Caco-2 (cell line): ENCODE measurements at regions of chr13 and their contacts with region 1.

Region 1: GRCh38 chr13:91193358-91193757 is 154.1 kb upstream of the MIR17HG start:
- DNase-seq: peak; percentile 43 to 51
- H3K4me3 ChIP-seq: no peak overlapping the region
- H3K4me3 Mint-ChIP-seq: no peak overlapping the region
- H3K27ac Mint-ChIP-seq: no peak overlapping the region
- H3K4me1 ChIP-seq: peaks cover 11% of the 10 kb centered on the region
- H3K4me1 Mint-ChIP-seq: peaks cover 11% of the 10 kb centered on the region
- H3K27me3 ChIP-seq: peaks cover 2% of the 10 kb centered on the region; the same call in 1 of the 2 replicates
- H3K27me3 Mint-ChIP-seq: no peaks in the 10 kb centered on the region
- CTCF ChIP-seq: peak; percentile 28 to 32

Region 2: DNA sequence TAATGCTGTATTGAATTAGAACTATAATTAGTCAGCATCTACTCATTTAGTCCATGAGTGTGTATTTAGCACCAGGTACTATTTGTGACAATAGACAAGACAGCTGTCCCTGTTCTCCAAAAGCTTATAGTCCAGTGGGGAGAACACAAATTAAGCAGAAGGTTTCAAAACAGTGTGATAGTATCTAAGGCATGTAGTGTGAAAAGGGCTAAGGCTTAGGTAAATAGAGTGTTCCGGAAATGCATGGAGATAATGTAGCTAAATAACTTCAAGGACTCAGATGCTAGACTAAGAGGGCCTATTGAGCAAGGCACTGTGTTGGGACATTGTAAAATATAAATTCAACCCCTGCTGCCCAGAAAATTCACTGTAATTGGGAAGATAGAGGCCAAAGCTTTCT is 10.1 kb after region 1 on chr13:
- CTCF ChIA-PET with region 1: interaction called, 6 read pairs
- POLR2A ChIA-PET with region 1: no interaction called
- intact Hi-C with region 1: loop called (anchors 1 kb)
- DNase-seq: no peak
- H3K4me3 ChIP-seq: no peak overlapping the region
- H3K4me3 Mint-ChIP-seq: no peak overlapping the region
- H3K27ac Mint-ChIP-seq: peak overlapping the region; percentile 48
- H3K4me1 ChIP-seq: peaks cover 17% of the 10 kb centered on the region
- H3K4me1 Mint-ChIP-seq: peaks cover 26% of the 10 kb centered on the region
- H3K27me3 ChIP-seq: no peaks in the 10 kb centered on the region
- H3K27me3 Mint-ChIP-seq: no peaks in the 10 kb centered on the region
- CTCF ChIP-seq: no peak